Tibial artery (tissue), 4 donors: ENCODE measurements at regions of chr7 and their contacts with region 1.

Region 1: DNA sequence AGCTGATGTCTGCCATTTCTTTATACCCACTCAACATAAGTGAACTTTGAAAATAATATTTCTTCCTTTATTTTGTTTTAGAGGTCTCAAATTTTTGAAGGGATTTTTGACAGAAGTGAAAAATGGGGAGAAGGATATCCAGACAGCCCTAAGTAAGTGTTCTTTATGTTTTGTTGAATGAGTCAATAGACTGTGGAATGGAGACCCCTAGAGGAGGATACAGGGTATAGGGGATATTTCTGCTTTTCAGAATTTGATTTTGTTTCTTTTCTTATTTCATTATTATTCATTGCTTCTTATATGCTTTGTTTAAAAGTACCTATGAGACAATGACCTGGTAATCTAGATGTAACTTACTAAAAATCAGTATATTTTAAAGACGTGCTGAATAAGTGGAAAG is 34.4 kb downstream of the PLEKHA8 start:
- DNase-seq: no peak
- H3K4me3 ChIP-seq: no peak overlapping the region
- H3K27ac ChIP-seq: no peak overlapping the region
- H3K4me1 ChIP-seq: peaks cover 0 to 9% (median 0%) of the 10 kb centered on the region in 4 donors
- H3K27me3 ChIP-seq: no peaks in the 10 kb centered on the region
- CTCF ChIP-seq: peak; percentile 49 to 63

Region 2: GRCh38 chr7:29748286-29749108 is 314.1 kb before region 1 on chr7:
- intact Hi-C with region 1: loop called (anchors 5 kb)
- DNase-seq: no peak
- H3K4me3 ChIP-seq: no peak overlapping the region
- H3K27ac ChIP-seq: no peak overlapping the region
- H3K4me1 ChIP-seq: peaks cover 0 to 7% (median 2%) of the 10 kb centered on the region in 4 donors
- H3K27me3 ChIP-seq: no peaks in the 10 kb centered on the region
- CTCF ChIP-seq: peak; percentile 52 to 62

Region 3: GRCh38 chr7:29946428-29947186 is 116.0 kb before region 1 on chr7:
- intact Hi-C with region 1: loop called (anchors 5 kb)
- DNase-seq: peak in 1 of 2 donors; percentile 33
- H3K4me3 ChIP-seq: no peak overlapping the region
- H3K27ac ChIP-seq: no peak overlapping the region
- H3K4me1 ChIP-seq: no peaks in the 10 kb centered on the region
- H3K27me3 ChIP-seq: no peaks in the 10 kb centered on the region
- CTCF ChIP-seq: peak; percentile 35 to 39

Region 4: DNA sequence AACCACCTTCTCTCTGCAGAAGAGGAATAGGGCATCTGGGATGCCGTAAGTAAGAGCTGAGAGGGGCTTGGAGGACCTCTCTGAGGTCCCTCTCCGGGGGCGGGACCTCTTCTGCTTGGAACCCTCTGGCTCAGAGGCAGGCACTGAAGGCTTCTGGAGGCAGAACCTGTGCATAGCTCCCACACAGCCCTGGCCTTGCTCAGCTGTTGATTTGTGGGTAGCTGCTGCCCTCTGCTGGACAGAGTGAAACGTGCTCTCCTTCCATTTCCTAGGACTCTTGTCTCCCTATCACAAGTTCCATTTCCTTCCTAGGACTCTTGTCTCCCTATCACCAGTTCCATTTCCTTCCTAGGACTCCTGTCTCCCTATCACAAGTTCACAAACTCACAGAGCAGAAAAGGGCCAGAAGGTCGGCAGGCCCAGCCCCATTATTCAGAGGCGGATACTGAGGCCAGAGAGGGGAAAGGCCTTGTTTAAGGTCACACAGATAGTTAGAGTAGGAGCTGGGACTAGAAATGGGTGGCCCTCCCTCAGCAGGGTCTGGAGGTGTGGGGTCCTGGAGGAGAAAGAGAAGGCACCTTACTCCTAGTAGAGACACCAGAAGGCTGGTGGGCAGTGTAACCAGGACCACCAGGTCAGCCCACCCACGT is 501.8 kb after region 1 on chr7:
- intact Hi-C with region 1: no loop called
- DNase-seq: peak; percentile 76 to 85
- H3K4me3 ChIP-seq: no peak overlapping the region
- H3K27ac ChIP-seq: no peak overlapping the region
- H3K4me1 ChIP-seq: peaks cover 0 to 6% (median 1%) of the 10 kb centered on the region in 4 donors
- H3K27me3 ChIP-seq: no peaks in the 10 kb centered on the region
- CTCF ChIP-seq: peak; percentile 73 to 82